CD4-positive, alpha-beta T cell (primary cell): ENCODE measurements at regions of chr1 and their contacts with region 1.

Region 1: GRCh38 chr1:2300851-2301606 is 72.9 kb downstream of the SKI start:
- DNase-seq: peak; percentile 86 to 99 (median 93)
- ATAC-seq: peak; percentile 76
- H3K4me3 ChIP-seq: peak overlapping the region; percentile 61
- H3K4me3 Mint-ChIP-seq: peak overlapping the region; percentile 91
- H3K27ac ChIP-seq: peak overlapping the region; percentile 97 to 98
- H3K27ac Mint-ChIP-seq: peak overlapping the region; percentile 99
- H3K4me1 ChIP-seq: peaks cover 72% of the 10 kb centered on the region
- H3K4me1 Mint-ChIP-seq: peaks cover 49% of the 10 kb centered on the region
- H3K27me3 ChIP-seq: no peaks in the 10 kb centered on the region
- H3K27me3 Mint-ChIP-seq: no peaks in the 10 kb centered on the region
- CTCF ChIP-seq: no peak

Region 2: DNA sequence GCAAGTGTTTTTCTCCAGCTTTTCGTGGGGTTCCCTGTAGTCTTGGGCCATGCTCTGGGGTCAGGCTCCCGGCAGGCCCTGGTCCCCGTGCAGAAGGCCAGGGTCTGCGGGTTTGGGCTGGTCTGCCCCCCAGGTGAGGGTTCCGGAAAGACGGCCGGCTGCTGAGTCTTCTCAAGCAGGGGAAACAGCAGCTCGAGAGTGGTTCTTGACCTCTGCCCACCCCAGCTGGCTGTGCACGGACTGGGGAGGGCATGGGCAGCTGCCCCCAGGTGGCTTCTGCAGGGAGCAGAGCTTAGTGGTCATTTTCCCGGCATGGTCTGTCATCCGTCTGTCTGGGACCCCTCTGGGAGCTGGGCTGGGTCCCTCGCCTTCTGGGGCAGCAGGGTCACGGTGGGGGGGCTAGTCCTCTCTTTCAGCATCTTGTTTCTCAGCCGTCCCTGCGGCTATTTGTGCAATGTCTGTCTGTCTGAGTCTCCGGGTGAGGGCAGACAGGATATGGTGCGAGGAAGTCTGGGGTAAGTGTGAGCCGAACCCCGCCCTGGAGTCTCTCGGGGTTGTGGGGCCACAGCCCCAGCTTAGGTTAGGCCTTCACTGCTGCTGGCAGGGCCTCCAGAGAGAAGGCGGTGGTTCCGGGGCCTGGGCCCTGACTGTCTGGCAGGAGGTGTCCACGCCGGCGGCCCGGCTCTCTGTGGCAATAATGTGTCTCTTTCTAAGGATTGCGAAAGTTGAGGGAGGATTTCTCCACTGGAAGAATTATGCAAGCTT is 66.8 kb before region 1 on chr1:
- CTCF ChIA-PET with region 1: interaction called, 6 read pairs
- POLR2A ChIA-PET with region 1: interaction called, 116 read pairs
- intact Hi-C with region 1: loop called (anchors 2 kb)
- DNase-seq: peak; percentile 62 to 93 (median 80)
- ATAC-seq: peak; percentile 49
- H3K4me3 ChIP-seq: peak overlapping the region; percentile 95
- H3K4me3 Mint-ChIP-seq: peak overlapping the region; percentile 99
- H3K27ac ChIP-seq: peak overlapping the region; percentile 80 to 92
- H3K27ac Mint-ChIP-seq: peak overlapping the region; percentile 100
- H3K4me1 ChIP-seq: peaks cover 99% of the 10 kb centered on the region
- H3K4me1 Mint-ChIP-seq: peaks cover 71% of the 10 kb centered on the region
- H3K27me3 ChIP-seq: no peaks in the 10 kb centered on the region
- H3K27me3 Mint-ChIP-seq: peaks cover 20% of the 10 kb centered on the region
- CTCF ChIP-seq: no peak

Region 3: DNA sequence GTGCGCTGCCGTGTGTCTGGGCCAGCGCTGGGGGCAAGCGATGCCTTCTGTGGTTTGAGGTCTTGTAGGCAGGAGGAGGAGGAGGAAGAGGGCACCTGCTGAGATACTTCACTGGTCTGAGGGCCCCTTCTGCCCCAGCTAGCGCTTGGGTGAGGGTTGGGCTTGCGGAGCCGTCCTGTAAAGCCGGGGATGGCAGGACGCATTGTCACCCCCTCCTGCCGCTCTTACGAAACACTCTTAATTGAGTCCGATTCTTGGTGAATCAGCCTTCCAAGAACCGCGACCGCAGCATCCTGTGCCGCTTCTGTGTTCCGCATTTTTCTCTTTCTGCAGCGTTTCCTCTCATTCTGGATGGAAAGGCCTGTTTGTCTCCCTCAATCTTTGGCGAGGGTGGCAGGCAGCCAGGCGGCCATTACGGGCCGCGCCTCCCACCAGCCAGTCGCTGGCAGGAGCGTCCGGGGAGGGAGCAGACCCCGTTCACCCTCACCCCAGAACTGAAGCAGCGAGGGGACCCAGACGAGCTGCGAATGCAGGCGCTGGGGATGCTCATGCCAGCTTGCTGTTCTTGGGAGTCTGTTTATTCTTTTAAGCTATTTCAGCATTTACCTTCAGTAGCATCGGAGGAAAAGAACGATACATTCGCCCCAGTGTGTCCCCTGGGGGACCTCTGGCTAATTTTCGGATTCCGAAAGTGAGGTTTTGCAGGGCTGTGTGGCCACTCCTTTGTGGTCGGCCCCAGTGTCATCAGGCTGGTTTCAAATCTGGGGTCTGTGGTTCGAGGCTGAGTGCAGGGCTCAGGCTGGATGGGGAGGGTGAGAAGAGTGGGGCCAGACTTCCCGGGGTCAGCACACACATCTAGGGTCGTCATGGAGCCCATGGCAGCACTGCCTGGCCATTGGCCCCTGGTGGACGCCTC is 10.2 kb before region 1 on chr1:
- CTCF ChIA-PET with region 1: interaction called, 14 read pairs
- POLR2A ChIA-PET with region 1: interaction called, 31 read pairs
- intact Hi-C with region 1: loop called in 1 of 2 experiments (anchors 1 kb)
- DNase-seq: peak; percentile 52 to 91 (median 76)
- ATAC-seq: peak; percentile 64
- H3K4me3 ChIP-seq: peak overlapping the region; percentile 51
- H3K4me3 Mint-ChIP-seq: peak overlapping the region; percentile 93
- H3K27ac ChIP-seq: peak overlapping the region; percentile 60 to 66
- H3K27ac Mint-ChIP-seq: peak overlapping the region; percentile 99
- H3K4me1 ChIP-seq: peaks cover 97% of the 10 kb centered on the region
- H3K4me1 Mint-ChIP-seq: peaks cover 87% of the 10 kb centered on the region
- H3K27me3 ChIP-seq: no peaks in the 10 kb centered on the region
- H3K27me3 Mint-ChIP-seq: no peaks in the 10 kb centered on the region
- CTCF ChIP-seq: no peak

Region 4: DNA sequence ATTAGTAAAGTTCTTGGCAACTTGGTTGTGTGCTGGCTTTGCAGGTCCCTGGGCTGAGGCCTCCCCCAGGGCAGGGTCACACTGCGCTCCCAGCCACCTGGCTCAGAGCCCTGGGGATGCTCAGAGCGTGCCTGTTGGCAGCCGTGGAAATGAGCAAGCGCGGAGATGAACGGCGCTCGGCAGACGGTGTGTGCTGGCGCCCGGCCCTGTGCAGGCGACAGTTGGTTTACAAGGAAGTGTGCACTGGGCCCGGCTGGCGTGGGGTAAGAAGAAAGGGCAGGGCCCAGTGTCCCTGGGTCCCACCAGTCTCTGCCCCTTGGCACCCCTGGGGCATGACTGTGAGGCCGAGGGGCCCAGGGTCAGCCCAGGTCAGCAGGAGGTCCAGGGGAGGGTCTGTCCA is 137.0 kb after region 1 on chr1:
- CTCF ChIA-PET with region 1: no interaction called
- POLR2A ChIA-PET with region 1: no interaction called
- intact Hi-C with region 1: no loop called
- DNase-seq: no peak
- ATAC-seq: no peak
- H3K4me3 ChIP-seq: no peak overlapping the region
- H3K4me3 Mint-ChIP-seq: no peak overlapping the region
- H3K27ac ChIP-seq: no peak overlapping the region
- H3K27ac Mint-ChIP-seq: no peak overlapping the region
- H3K4me1 ChIP-seq: peaks cover 5% of the 10 kb centered on the region
- H3K4me1 Mint-ChIP-seq: peaks cover 4% of the 10 kb centered on the region
- H3K27me3 ChIP-seq: peaks cover 9 to 15% of the 10 kb centered on the region in 2 experiments
- H3K27me3 Mint-ChIP-seq: peaks cover 19% of the 10 kb centered on the region
- CTCF ChIP-seq: no peak

Region 5: DNA sequence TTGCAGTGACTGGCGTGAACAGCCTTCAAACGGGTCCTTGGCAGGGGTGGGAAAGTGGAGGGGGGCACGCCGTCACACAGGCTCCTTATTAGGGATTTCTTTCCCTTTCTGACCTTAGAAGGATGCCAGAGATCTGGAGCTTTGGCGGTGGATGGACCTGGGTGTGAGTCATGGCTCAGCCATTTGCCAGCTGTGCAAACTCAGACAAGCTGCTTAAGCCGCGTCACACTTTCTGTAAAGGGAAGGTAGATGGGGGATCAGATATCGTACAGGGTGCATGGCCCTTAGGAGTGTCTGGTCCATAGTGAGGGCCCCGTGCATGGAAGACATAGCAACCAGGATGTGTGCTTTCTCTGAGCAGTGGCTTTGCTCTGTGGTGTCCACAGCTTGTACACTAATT is 1647.3 kb after region 1 on chr1:
- CTCF ChIA-PET with region 1: no interaction called
- POLR2A ChIA-PET with region 1: no interaction called
- intact Hi-C with region 1: no loop called
- DNase-seq: no peak
- ATAC-seq: no peak
- H3K4me3 ChIP-seq: no peak overlapping the region
- H3K4me3 Mint-ChIP-seq: no peak overlapping the region
- H3K27ac ChIP-seq: no peak overlapping the region
- H3K27ac Mint-ChIP-seq: no peak overlapping the region
- H3K4me1 ChIP-seq: no peaks in the 10 kb centered on the region
- H3K4me1 Mint-ChIP-seq: no peaks in the 10 kb centered on the region
- H3K27me3 ChIP-seq: peaks cover 2 to 5% of the 10 kb centered on the region in 2 experiments
- H3K27me3 Mint-ChIP-seq: peaks cover 61% of the 10 kb centered on the region
- CTCF ChIP-seq: no peak